A673 (cell line): ENCODE measurements at regions of chr5 and their contacts with region 1.

Region 1: GRCh38 chr5:77143998-77144836 is 57.1 kb upstream of the ZBED3 start:
- DNase-seq: peak; percentile 76
- H3K4me3 ChIP-seq: no peak overlapping the region
- H3K27ac ChIP-seq: no peak overlapping the region
- H3K4me1 ChIP-seq: no peaks in the 10 kb centered on the region
- H3K27me3 ChIP-seq: no peaks in the 10 kb centered on the region
- CTCF ChIP-seq: peak; percentile 88

Region 2: DNA sequence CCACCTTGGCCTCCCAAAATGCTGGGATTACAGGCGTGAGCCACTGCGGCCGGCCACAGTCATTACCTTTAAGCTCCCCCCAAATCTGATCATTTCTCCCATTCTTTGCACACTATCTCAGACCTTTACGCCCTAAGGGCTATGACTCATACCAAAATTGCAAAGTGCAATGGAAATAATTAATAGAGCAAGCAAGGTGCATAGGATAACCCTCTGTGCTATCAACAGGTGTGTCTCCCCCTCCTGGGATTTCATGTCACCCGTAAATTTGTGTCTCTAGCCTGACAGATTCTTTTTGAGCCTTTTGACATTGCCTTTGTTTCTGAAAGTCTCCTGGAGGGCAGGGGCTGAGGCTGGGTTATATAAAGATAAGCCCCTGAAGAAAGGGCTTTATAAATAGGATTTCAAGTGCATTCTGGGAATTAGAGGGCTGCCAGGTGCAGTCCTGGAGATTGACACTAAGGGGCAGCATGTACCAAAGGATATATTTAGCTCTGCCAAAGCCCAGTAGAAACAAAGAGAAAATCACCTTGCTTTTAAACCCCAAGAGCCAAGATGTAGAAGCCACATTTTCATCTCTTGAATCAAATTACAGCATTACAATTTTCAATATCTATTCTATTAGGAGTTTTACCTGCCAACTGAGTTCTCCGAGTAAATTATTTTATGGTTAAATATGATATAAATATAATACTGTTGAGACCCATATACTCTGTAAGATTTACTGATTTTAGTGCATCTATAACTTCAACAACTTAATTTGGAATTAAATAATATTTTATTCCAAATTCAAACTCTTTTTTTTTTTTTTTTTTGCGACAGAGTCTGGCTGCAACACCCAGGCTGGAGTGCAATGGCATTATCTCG is 276.2 kb before region 1 on chr5:
- CTCF ChIA-PET with region 1: no interaction called
- POLR2A ChIA-PET with region 1: no interaction called
- intact Hi-C with region 1: loop called (anchors 10 kb)
- DNase-seq: peak; percentile 81
- H3K4me3 ChIP-seq: no peak overlapping the region
- H3K27ac ChIP-seq: no peak overlapping the region
- H3K4me1 ChIP-seq: no peaks in the 10 kb centered on the region
- H3K27me3 ChIP-seq: no peaks in the 10 kb centered on the region
- CTCF ChIP-seq: peak; percentile 85

Region 3: DNA sequence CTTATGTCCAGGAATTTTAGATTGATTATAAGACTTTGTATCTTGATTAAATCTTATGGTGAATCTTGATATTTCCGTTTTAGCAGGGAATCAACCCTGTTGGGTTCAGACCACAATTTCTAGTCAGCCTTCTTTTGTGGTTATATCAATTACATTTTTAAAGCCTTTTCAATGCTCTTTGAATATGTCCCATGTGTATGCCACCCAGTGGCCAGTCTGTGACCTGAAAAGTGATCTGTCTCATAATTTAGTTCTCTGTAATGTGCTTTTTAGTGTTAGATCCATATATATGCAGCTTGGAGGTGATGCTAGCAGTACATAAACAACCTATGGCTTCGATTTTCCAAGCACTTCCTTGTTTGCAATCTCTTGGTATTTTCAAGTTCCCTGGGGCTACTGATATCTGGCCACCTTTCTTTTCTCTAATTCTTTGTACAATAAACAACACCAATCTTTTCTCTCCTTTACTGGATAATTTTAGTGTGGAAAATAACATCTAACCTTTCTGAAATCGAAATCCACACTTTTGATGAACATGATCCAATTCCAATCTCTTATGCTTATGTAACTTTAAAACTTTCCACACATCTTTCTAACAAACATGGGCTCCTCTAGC is 95.0 kb after region 1 on chr5:
- CTCF ChIA-PET with region 1: no interaction called
- POLR2A ChIA-PET with region 1: no interaction called
- intact Hi-C with region 1: loop called (anchors 5 kb)
- DNase-seq: peak; percentile 26
- H3K4me3 ChIP-seq: no peak overlapping the region
- H3K27ac ChIP-seq: no peak overlapping the region
- H3K4me1 ChIP-seq: no peaks in the 10 kb centered on the region
- H3K27me3 ChIP-seq: no peaks in the 10 kb centered on the region
- CTCF ChIP-seq: peak; percentile 42

Region 4: GRCh38 chr5:77437194-77437593 is 293.0 kb after region 1 on chr5:
- CTCF ChIA-PET with region 1: no interaction called
- POLR2A ChIA-PET with region 1: no interaction called
- intact Hi-C with region 1: loop called (anchors 10 kb)
- DNase-seq: no peak
- H3K4me3 ChIP-seq: no peak overlapping the region
- H3K27ac ChIP-seq: no peak overlapping the region
- H3K4me1 ChIP-seq: no peaks in the 10 kb centered on the region
- H3K27me3 ChIP-seq: no peaks in the 10 kb centered on the region
- CTCF ChIP-seq: peak; percentile 38; the same call in 1 of the 2 replicates

Region 5: GRCh38 chr5:77491783-77492652 is 347.8 kb after region 1 on chr5 and contains the start of gene WDR41:
- CTCF ChIA-PET with region 1: no interaction called
- POLR2A ChIA-PET with region 1: no interaction called
- intact Hi-C with region 1: loop called (anchors 5 kb)
- DNase-seq: peak; percentile 93
- H3K4me3 ChIP-seq: peak within 1 kb of the TSS; percentile 83
- H3K27ac ChIP-seq: peak within 1 kb of the TSS; percentile 85
- H3K4me1 ChIP-seq: peaks cover 4% of the 10 kb centered on the region
- H3K27me3 ChIP-seq: peaks cover 36% of the 10 kb centered on the region
- CTCF ChIP-seq: peak; percentile 82
- total RNA-seq, gene WDR41: 30.4 and 36.6 TPM in 2 replicates